ENCODE measurements at regions of chr17 and their contacts with region 1.

Region 1: DNA sequence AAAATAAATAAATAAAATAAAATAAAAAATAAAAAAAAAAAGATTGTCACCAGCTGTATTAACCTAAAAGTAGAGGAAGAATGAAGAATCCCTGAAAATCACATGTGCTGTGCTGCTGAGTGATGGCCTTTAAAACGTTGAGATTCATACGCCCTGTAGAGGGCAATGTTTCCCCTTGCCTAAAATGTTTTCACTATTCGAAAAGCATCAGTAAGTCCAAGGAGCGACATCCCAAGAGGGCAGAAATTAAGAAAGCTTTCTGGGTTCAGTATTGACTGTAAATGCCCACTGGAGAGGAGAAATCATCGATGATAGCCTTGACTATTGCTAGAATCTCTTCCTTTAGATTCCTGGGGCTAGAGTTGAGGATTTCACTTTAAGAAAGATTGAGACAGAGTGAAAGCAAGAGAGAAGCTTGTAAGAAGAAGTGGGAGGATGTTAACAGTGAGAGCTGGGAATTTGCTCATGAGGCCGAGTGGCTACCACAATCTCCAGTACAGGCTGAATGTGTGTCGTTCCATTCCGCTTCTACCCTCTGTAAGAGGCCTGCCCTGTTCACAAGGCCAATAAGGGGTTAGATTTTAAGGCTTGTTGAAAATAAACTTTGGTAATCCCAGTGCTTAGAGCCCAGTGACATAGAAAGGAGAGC is 170.8 kb upstream of the FAM20A start:
- DNase-seq: peak; percentile 75
- ATAC-seq: peak; percentile 96
- H3K4me3 ChIP-seq: peak overlapping the region; percentile 26; the same call in 1 of the 2 replicates
- H3K27ac ChIP-seq: no peak overlapping the region
- H3K4me1 ChIP-seq: peaks cover 4% of the 10 kb centered on the region; the same call in 1 of the 2 replicates
- H3K27me3 ChIP-seq: no peaks in the 10 kb centered on the region
- CTCF ChIP-seq: peak; percentile 78
- POLR2A ChIP-seq: no peak
- RAD21 ChIP-seq: peak; percentile 81

Region 2: DNA sequence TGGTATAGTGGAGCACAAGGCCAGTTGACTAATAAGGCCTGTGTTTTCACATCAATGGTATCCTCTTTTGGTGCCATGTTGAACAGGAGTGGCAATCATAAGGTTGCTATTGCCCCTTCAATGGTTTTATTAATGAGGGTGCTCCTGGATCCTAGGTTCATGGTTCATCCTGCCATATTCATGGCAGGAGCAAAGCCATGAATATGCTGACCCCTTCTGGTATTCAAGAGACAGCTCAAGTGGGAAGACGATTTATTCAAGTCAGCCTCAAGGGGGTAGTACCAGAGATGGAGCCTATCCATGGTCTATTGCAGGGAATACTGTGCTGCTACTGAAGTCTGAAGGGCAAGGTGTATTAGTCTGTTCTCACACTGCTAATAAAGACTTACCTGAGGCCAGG is 286.2 kb after region 1 on chr17:
- CTCF ChIA-PET with region 1: no interaction called
- POLR2A ChIA-PET with region 1: no interaction called
- dilution Hi-C with region 1: no loop called
- in situ Hi-C with region 1: no loop called
- intact Hi-C with region 1: loop called (anchors 10 kb)
- DNase-seq: no peak
- ATAC-seq: no peak
- H3K4me3 ChIP-seq: no peak overlapping the region
- H3K27ac ChIP-seq: no peak overlapping the region
- H3K4me1 ChIP-seq: no peaks in the 10 kb centered on the region
- H3K27me3 ChIP-seq: no peaks in the 10 kb centered on the region
- CTCF ChIP-seq: 0 out of 2 replicates have a peak, but pooled peaks have one; percentile 5
- POLR2A ChIP-seq: no peak
- RAD21 ChIP-seq: no peak

Region 3: GRCh38 chr17:69235338-69235930 is 463.4 kb after region 1 on chr17:
- CTCF ChIA-PET with region 1: interaction called, 9 read pairs
- POLR2A ChIA-PET with region 1: no interaction called
- dilution Hi-C with region 1: no loop called
- in situ Hi-C with region 1: loop called (anchors 5 kb)
- intact Hi-C with region 1: loop called (anchors 1 kb)
- DNase-seq: peak; percentile 70
- ATAC-seq: peak; percentile 94
- H3K4me3 ChIP-seq: no peak overlapping the region
- H3K27ac ChIP-seq: no peak overlapping the region
- H3K4me1 ChIP-seq: no peaks in the 10 kb centered on the region
- H3K27me3 ChIP-seq: no peaks in the 10 kb centered on the region
- CTCF ChIP-seq: peak; percentile 81
- POLR2A ChIP-seq: no peak
- RAD21 ChIP-seq: peak; percentile 81